ENCODE measurements at regions of chr1 and their contacts with region 1.

Region 1: DNA sequence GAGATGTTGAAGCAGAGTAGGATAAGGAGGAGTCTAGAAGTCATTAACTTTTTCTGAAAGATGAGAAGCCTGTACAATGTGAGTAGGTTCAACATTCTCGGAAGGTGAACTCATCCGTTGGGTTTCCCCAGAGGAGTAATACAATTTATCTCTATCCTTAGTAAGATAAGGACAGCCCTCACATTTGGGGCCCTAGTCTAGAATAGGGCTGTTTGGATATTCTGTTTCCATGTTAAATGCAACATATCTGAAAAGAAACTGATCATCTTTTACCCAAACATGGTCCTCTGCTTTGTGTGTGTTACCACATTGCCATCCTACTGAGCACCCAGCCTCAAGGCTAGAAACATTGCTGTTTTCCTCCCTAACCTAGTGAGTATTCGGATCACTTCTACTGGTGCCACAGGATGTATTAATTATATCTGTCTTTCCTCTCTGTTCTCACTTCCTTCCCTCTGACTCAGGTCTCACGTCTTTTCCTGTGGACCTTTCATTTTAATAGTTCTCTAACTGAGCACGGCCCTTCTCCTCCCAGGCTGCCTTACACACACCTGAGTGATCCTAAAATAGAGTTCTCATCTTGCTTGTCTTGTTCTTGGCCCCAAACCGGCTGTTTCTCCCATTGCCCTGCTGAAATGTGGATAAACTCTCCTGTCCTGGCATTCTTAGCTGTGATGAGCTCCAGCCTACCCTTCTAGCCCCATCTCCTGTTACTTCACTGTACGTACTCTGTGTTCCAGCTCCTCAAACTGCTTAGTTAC is 91.7 kb downstream of the CDC14A start:
- DNase-seq: peak; percentile 43
- ATAC-seq: peak; percentile 48
- H3K4me3 Mint-ChIP-seq: peak overlapping the region; percentile 60
- H3K27ac Mint-ChIP-seq: peak overlapping the region; percentile 90
- H3K4me1 Mint-ChIP-seq: peaks cover 81% of the 10 kb centered on the region
- H3K27me3 Mint-ChIP-seq: no peaks in the 10 kb centered on the region

Region 2: GRCh38 chr1:100377590-100378361 is 66.2 kb before region 1 on chr1:
- CTCF ChIA-PET with region 1: no interaction called
- POLR2A ChIA-PET with region 1: no interaction called
- DNase-seq: no peak
- ATAC-seq: peak; percentile 78
- H3K4me3 Mint-ChIP-seq: peak overlapping the region; percentile 12
- H3K27ac Mint-ChIP-seq: peak overlapping the region; percentile 60
- H3K4me1 Mint-ChIP-seq: peaks cover 44% of the 10 kb centered on the region
- H3K27me3 Mint-ChIP-seq: no peaks in the 10 kb centered on the region

Region 3: GRCh38 chr1:100400404-100400803 is 43.6 kb before region 1 on chr1:
- CTCF ChIA-PET with region 1: interaction called, 6 read pairs
- POLR2A ChIA-PET with region 1: interaction called, 13 read pairs
- DNase-seq: peak; percentile 85
- ATAC-seq: peak; percentile 90
- H3K4me3 Mint-ChIP-seq: peak overlapping the region; percentile 58
- H3K27ac Mint-ChIP-seq: peak overlapping the region; percentile 91
- H3K4me1 Mint-ChIP-seq: peaks cover 85% of the 10 kb centered on the region
- H3K27me3 Mint-ChIP-seq: no peaks in the 10 kb centered on the region

Region 4: GRCh38 chr1:100423832-100424337 is 20.1 kb before region 1 on chr1:
- CTCF ChIA-PET with region 1: interaction called, 11 read pairs
- POLR2A ChIA-PET with region 1: no interaction called
- DNase-seq: no peak
- ATAC-seq: peak; percentile 36
- H3K4me3 Mint-ChIP-seq: no peak overlapping the region
- H3K27ac Mint-ChIP-seq: no peak overlapping the region
- H3K4me1 Mint-ChIP-seq: peaks cover 36% of the 10 kb centered on the region
- H3K27me3 Mint-ChIP-seq: no peaks in the 10 kb centered on the region

Region 5: GRCh38 chr1:100469578-100469977 is 25.6 kb after region 1 on chr1:
- CTCF ChIA-PET with region 1: no interaction called
- POLR2A ChIA-PET with region 1: no interaction called
- DNase-seq: no peak
- ATAC-seq: no peak
- H3K4me3 Mint-ChIP-seq: no peak overlapping the region
- H3K27ac Mint-ChIP-seq: no peak overlapping the region
- H3K4me1 Mint-ChIP-seq: peaks cover 10% of the 10 kb centered on the region
- H3K27me3 Mint-ChIP-seq: no peaks in the 10 kb centered on the region